CD4-positive, alpha-beta T cell (primary cell): ENCODE measurements at regions of chr5 and their contacts with region 1.

Region 1: GRCh38 chr5:61331407-61332357 is at the start of gene ZSWIM6:
- DNase-seq: peak; percentile 99 to 100 (median 99)
- ATAC-seq: peak; percentile 82
- H3K4me3 ChIP-seq: peak within 1 kb of the TSS; percentile 93
- H3K4me3 Mint-ChIP-seq: peak within 1 kb of the TSS; percentile 100
- H3K27ac ChIP-seq: peak within 1 kb of the TSS; percentile 87 to 93
- H3K27ac Mint-ChIP-seq: peak within 1 kb of the TSS; percentile 100
- H3K4me1 ChIP-seq: peaks cover 27% of the 10 kb centered on the region
- H3K4me1 Mint-ChIP-seq: peaks cover 47% of the 10 kb centered on the region
- H3K27me3 ChIP-seq: peaks cover 7 to 16% of the 10 kb centered on the region in 2 experiments
- H3K27me3 Mint-ChIP-seq: peaks cover 38% of the 10 kb centered on the region
- CTCF ChIP-seq: no peak
- total RNA-seq, gene ZSWIM6: 4.1 TPM

Region 2: DNA sequence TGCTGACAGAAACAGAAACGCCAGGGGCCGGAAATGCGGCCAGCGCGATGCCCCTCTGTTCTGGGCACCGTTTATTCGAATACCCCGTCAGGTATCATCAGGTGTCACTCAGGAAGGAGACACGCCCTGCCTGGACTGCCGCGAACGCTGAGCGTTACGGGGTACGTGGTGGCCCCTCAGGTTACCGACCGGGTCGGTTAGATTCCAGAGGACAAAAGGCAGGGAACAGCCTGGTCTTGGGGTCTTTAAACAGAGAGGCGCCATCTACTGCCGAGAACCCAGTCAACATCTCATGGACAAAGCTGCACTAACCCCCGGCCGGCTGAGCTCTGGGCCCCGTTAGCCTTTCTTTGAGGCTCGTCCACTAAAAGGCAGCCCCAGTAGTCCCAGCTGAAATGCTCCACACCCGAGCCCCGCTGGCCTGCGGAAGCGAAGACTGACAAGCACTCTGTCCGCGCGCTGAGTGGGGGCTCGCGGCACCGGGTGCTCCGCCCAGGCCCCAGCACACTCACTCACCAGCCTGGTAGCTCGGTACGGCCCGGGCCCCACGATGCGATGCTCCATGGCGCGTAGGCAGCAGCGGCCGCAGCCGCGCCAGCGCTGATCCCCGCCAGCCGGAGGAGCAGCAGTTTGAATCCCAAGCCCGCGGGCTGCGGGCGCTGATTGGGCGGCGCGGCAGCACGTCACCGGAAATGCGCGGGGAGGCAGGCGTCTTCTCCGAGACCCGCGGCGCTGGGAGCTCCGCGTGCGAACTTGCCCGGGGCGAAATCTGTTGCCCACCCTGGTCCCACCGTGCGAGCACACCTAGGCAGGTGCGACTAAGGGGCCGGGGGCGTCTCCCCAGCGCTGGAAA is 631.9 kb before region 1 on chr5 and contains the start of gene DEPDC1B:
- CTCF ChIA-PET with region 1: no interaction called
- POLR2A ChIA-PET with region 1: no interaction called
- intact Hi-C with region 1: loop called in 1 of 2 experiments (anchors 5 kb)
- DNase-seq: peak; percentile 57 to 91 (median 76)
- ATAC-seq: peak; percentile 89
- H3K4me3 ChIP-seq: peak within 1 kb of the TSS; percentile 95
- H3K4me3 Mint-ChIP-seq: peak within 1 kb of the TSS; percentile 96
- H3K27ac ChIP-seq: peak within 1 kb of the TSS in 1 of 2 donors; percentile 36
- H3K27ac Mint-ChIP-seq: peak within 1 kb of the TSS; percentile 45
- H3K4me1 ChIP-seq: peaks cover 24% of the 10 kb centered on the region
- H3K4me1 Mint-ChIP-seq: peaks cover 22% of the 10 kb centered on the region
- H3K27me3 ChIP-seq: no peaks in the 10 kb centered on the region
- H3K27me3 Mint-ChIP-seq: no peaks in the 10 kb centered on the region
- CTCF ChIP-seq: no peak
- total RNA-seq, gene DEPDC1B: 0.39 to 0.60 TPM

Region 3: GRCh38 chr5:61115968-61116367 is 215.7 kb before region 1 on chr5:
- CTCF ChIA-PET with region 1: no interaction called
- POLR2A ChIA-PET with region 1: no interaction called
- intact Hi-C with region 1: no loop called
- DNase-seq: no peak
- ATAC-seq: no peak
- H3K4me3 ChIP-seq: no peak overlapping the region
- H3K4me3 Mint-ChIP-seq: no peak overlapping the region
- H3K27ac ChIP-seq: no peak overlapping the region
- H3K27ac Mint-ChIP-seq: no peak overlapping the region
- H3K4me1 ChIP-seq: no peaks in the 10 kb centered on the region
- H3K4me1 Mint-ChIP-seq: no peaks in the 10 kb centered on the region
- H3K27me3 ChIP-seq: no peaks in the 10 kb centered on the region
- H3K27me3 Mint-ChIP-seq: no peaks in the 10 kb centered on the region
- CTCF ChIP-seq: no peak

Region 4: DNA sequence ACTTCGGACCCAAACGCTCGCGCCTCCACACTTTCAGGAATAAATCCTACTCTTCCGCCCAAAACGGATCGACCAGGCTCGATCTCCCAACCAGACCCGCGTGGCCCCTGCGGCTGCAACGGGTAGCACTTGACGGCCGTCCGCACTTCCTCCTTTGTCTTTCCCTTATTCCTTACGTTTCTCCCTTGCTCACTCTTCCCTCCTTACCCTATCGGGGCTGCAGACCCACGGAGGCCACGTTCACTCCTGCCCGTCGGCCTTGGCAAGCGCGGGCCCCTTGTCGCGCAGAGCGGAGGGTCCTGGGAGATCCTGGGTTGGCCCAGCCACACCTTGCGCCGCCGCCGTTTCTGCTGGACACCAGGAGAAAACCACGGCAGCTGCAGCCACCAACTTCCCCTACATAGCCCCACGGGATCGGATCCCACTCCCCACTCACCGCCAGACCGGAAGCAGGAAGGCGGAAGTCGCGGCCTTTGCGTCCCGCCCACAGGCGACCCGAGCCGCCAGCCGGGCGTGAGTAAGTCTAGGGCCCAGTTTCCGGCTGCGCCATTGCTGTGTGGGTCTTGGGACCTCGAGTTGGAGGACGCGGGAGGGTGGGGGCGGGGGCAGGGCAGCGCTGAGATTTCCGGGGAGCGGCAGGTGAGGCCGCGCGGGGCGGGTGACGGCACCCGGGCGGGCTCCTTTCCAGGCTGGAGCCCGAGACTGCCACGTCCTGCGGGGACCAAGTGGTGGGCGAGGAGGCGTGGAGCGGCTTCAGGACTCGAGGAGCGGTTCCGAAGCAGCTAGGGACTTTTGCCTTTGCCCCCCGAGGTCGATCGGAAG is 169.5 kb before region 1 on chr5 and contains the start of gene SMIM15:
- CTCF ChIA-PET with region 1: no interaction called
- POLR2A ChIA-PET with region 1: interaction called, 11 read pairs
- intact Hi-C with region 1: loop called (anchors 2 to 5 kb)
- DNase-seq: peak; percentile 60 to 89 (median 75)
- ATAC-seq: peak; percentile 85
- H3K4me3 ChIP-seq: peak within 1 kb of the TSS; percentile 73
- H3K4me3 Mint-ChIP-seq: peak within 1 kb of the TSS; percentile 94
- H3K27ac ChIP-seq: peak within 1 kb of the TSS; percentile 69 to 77
- H3K27ac Mint-ChIP-seq: peak within 1 kb of the TSS; percentile 84
- H3K4me1 ChIP-seq: peaks cover 7% of the 10 kb centered on the region
- H3K4me1 Mint-ChIP-seq: peaks cover 50% of the 10 kb centered on the region
- H3K27me3 ChIP-seq: no peaks in the 10 kb centered on the region
- H3K27me3 Mint-ChIP-seq: no peaks in the 10 kb centered on the region
- CTCF ChIP-seq: no peak
- total RNA-seq, gene SMIM15: 16.5 to 18.2 TPM

Region 5: DNA sequence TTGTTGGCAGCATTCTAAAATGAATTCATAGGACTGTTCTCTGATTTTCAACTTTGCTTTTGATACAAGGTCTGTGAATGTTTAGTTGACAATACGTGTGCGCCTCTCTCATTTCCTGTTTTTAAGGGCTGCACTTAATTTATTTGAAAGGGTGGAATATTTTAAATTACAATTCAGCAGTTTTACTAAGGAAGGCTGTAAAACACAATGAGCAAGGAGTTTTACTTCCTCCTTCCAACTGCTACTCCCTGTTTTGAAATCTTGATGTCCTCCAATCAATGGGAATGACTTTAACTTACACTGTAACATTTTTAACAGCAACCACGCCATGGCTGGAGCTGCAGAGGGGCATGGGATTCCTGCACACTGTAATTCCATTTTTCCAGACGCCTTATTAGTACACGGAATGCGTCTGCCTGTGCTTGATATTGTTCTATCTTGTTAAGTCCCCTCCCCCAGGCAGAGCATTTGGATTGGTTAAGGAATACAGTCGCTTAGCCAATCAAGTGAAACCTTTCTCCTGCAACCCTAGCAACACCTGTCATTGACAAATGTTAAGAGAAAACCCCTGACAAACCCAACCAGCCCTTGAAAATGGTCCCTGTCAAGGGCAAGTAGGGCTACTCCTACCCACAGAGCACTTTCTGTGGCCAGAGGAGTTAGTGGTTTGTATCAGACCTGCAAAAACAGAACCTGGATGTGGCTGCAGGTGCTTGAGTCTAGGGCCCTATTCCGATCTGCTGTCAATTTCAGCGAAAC is 12.1 kb before region 1 on chr5:
- CTCF ChIA-PET with region 1: no interaction called
- POLR2A ChIA-PET with region 1: interaction called, 22 read pairs
- intact Hi-C with region 1: no loop called
- DNase-seq: peak in 4 of 14 experiments; percentile 10 to 58 (median 43)
- ATAC-seq: peak; percentile 71
- H3K4me3 ChIP-seq: peak overlapping the region; percentile 4
- H3K4me3 Mint-ChIP-seq: peak overlapping the region; percentile 42
- H3K27ac ChIP-seq: no peak overlapping the region
- H3K27ac Mint-ChIP-seq: peak overlapping the region; percentile 43
- H3K4me1 ChIP-seq: peaks cover 9% of the 10 kb centered on the region
- H3K4me1 Mint-ChIP-seq: peaks cover 11% of the 10 kb centered on the region
- H3K27me3 ChIP-seq: no peaks in the 10 kb centered on the region
- H3K27me3 Mint-ChIP-seq: peaks cover 21% of the 10 kb centered on the region
- CTCF ChIP-seq: no peak

Region 6: GRCh38 chr5:61549530-61549929 is 217.8 kb after region 1 on chr5:
- CTCF ChIA-PET with region 1: no interaction called
- POLR2A ChIA-PET with region 1: no interaction called
- intact Hi-C with region 1: no loop called
- DNase-seq: no peak
- ATAC-seq: no peak
- H3K4me3 ChIP-seq: no peak overlapping the region
- H3K4me3 Mint-ChIP-seq: no peak overlapping the region
- H3K27ac ChIP-seq: no peak overlapping the region
- H3K27ac Mint-ChIP-seq: no peak overlapping the region
- H3K4me1 ChIP-seq: no peaks in the 10 kb centered on the region
- H3K4me1 Mint-ChIP-seq: no peaks in the 10 kb centered on the region
- H3K27me3 ChIP-seq: no peaks in the 10 kb centered on the region
- H3K27me3 Mint-ChIP-seq: no peaks in the 10 kb centered on the region
- CTCF ChIP-seq: no peak

Region 7: GRCh38 chr5:61658592-61659008 is 326.9 kb after region 1 on chr5:
- CTCF ChIA-PET with region 1: no interaction called
- POLR2A ChIA-PET with region 1: no interaction called
- intact Hi-C with region 1: loop called in 1 of 2 experiments (anchors 10 kb)
- DNase-seq: peak; percentile 67 to 89 (median 81)
- ATAC-seq: peak; percentile 74
- H3K4me3 ChIP-seq: no peak overlapping the region
- H3K4me3 Mint-ChIP-seq: no peak overlapping the region
- H3K27ac ChIP-seq: no peak overlapping the region
- H3K27ac Mint-ChIP-seq: no peak overlapping the region
- H3K4me1 ChIP-seq: no peaks in the 10 kb centered on the region
- H3K4me1 Mint-ChIP-seq: no peaks in the 10 kb centered on the region
- H3K27me3 ChIP-seq: no peaks in the 10 kb centered on the region
- H3K27me3 Mint-ChIP-seq: peaks cover 14% of the 10 kb centered on the region
- CTCF ChIP-seq: peak; percentile 98

Region 8: DNA sequence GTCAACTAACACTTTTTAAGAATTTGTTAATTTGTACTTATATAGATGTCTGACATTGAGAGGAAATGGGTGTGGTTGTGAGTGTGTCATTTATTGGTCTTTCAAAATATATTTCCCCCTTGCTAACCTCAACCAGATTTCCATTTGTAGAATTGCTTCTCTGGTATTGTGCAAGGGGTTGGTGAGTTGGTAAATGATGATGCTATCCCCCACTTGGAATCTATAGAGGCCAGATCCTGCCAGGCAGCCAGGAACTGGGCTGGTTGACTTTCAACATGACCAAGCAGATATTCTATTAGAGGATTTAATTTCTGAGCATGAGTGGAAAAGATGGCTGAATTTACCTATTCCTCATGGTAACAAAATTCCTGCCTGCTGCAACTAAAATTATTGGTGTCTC is 667.7 kb after region 1 on chr5:
- CTCF ChIA-PET with region 1: no interaction called
- POLR2A ChIA-PET with region 1: no interaction called
- intact Hi-C with region 1: no loop called
- DNase-seq: no peak
- ATAC-seq: no peak
- H3K4me3 ChIP-seq: no peak overlapping the region
- H3K4me3 Mint-ChIP-seq: no peak overlapping the region
- H3K27ac ChIP-seq: no peak overlapping the region
- H3K27ac Mint-ChIP-seq: no peak overlapping the region
- H3K4me1 ChIP-seq: no peaks in the 10 kb centered on the region
- H3K4me1 Mint-ChIP-seq: no peaks in the 10 kb centered on the region
- H3K27me3 ChIP-seq: no peaks in the 10 kb centered on the region
- H3K27me3 Mint-ChIP-seq: peaks cover 4% of the 10 kb centered on the region
- CTCF ChIP-seq: no peak